ENCODE measurements at regions of chr12 and their contacts with region 1.

Region 1: GRCh38 chr12:6533923-6534694 is at the start of gene GAPDH:
- DNase-seq: peak; percentile 96
- ATAC-seq: peak; percentile 52
- H3K4me3 ChIP-seq: peak within 1 kb of the TSS; percentile 96 to 98
- H3K27ac ChIP-seq: peak within 1 kb of the TSS; percentile 99
- H3K4me1 ChIP-seq: peaks cover 15 to 70% of the 10 kb centered on the region in 2 experiments
- H3K27me3 ChIP-seq: no peaks in the 10 kb centered on the region
- CTCF ChIP-seq: no peak
- POLR2A ChIP-seq: peak; percentile 99
- RAD21 ChIP-seq: no peak
- total RNA-seq, gene GAPDH: 5,901 TPM

Region 2: GRCh38 chr12:6335451-6336078 is 198.5 kb before region 1 on chr12:
- CTCF ChIA-PET with region 1: no interaction called
- POLR2A ChIA-PET with region 1: interaction called, 9 read pairs
- RAD21 ChIA-PET with region 1: no interaction called
- intact Hi-C with region 1: loop called (anchors 10 kb)
- DNase-seq: no peak
- ATAC-seq: peak; percentile 48
- H3K4me3 ChIP-seq: peak overlapping the region; percentile 32 to 64
- H3K27ac ChIP-seq: peak overlapping the region; percentile 99
- H3K4me1 ChIP-seq: peaks cover 55 to 78% of the 10 kb centered on the region in 2 experiments
- H3K27me3 ChIP-seq: no peaks in the 10 kb centered on the region
- CTCF ChIP-seq: peak in 2 of 3 experiments; percentile 50 to 61; a peak in 4 of 6 replicates
- POLR2A ChIP-seq: no peak
- RAD21 ChIP-seq: no peak

Region 3: GRCh38 chr12:6470375-6471163 is 63.5 kb before region 1 on chr12 and contains the start of gene VAMP1:
- CTCF ChIA-PET with region 1: interaction called, 5 read pairs
- POLR2A ChIA-PET with region 1: interaction called, 15 read pairs
- RAD21 ChIA-PET with region 1: no interaction called
- intact Hi-C with region 1: no loop called
- DNase-seq: peak; percentile 94
- ATAC-seq: peak; percentile 94
- H3K4me3 ChIP-seq: peak within 1 kb of the TSS; percentile 62 to 88
- H3K27ac ChIP-seq: peak within 1 kb of the TSS; percentile 72
- H3K4me1 ChIP-seq: peaks cover 11 to 27% of the 10 kb centered on the region in 2 experiments
- H3K27me3 ChIP-seq: no peaks in the 10 kb centered on the region
- CTCF ChIP-seq: no peak
- POLR2A ChIP-seq: peak; percentile 99
- RAD21 ChIP-seq: no peak
- total RNA-seq, gene VAMP1: 12.1 TPM

Region 4: GRCh38 chr12:6554168-6555017 is 20.3 kb after region 1 on chr12:
- CTCF ChIA-PET with region 1: interaction called, 19 read pairs
- POLR2A ChIA-PET with region 1: interaction called, 84 read pairs
- RAD21 ChIA-PET with region 1: no interaction called
- intact Hi-C with region 1: no loop called
- DNase-seq: peak; percentile 62
- ATAC-seq: peak; percentile 90
- H3K4me3 ChIP-seq: no peak overlapping the region
- H3K27ac ChIP-seq: no peak overlapping the region
- H3K4me1 ChIP-seq: peaks cover 3 to 16% of the 10 kb centered on the region in 2 experiments; a peak in 3 of 4 replicates
- H3K27me3 ChIP-seq: no peaks in the 10 kb centered on the region
- CTCF ChIP-seq: peak; percentile 40 to 61 (median 60); a peak in 5 of 6 replicates
- POLR2A ChIP-seq: no peak
- RAD21 ChIP-seq: peak; percentile 61

Region 5: GRCh38 chr12:6613776-6614512 is 79.8 kb after region 1 on chr12:
- CTCF ChIA-PET with region 1: interaction called, 6 read pairs
- POLR2A ChIA-PET with region 1: interaction called, 13 read pairs
- RAD21 ChIA-PET with region 1: no interaction called
- intact Hi-C with region 1: no loop called
- DNase-seq: peak; percentile 95
- ATAC-seq: peak; percentile 74
- H3K4me3 ChIP-seq: no peak overlapping the region; a peak in 1 of 4 replicates
- H3K27ac ChIP-seq: peak overlapping the region; percentile 97
- H3K4me1 ChIP-seq: peaks cover 38 to 45% of the 10 kb centered on the region in 2 experiments
- H3K27me3 ChIP-seq: no peaks in the 10 kb centered on the region
- CTCF ChIP-seq: peak in 2 of 3 experiments; percentile 27 to 34; a peak in 3 of 6 replicates
- POLR2A ChIP-seq: no peak
- RAD21 ChIP-seq: no peak

Measured in HCT116 (cell line).